Sigmoid colon (tissue), 7 donors: ENCODE measurements at regions of chr17 and their contacts with region 1.

Region 1: DNA sequence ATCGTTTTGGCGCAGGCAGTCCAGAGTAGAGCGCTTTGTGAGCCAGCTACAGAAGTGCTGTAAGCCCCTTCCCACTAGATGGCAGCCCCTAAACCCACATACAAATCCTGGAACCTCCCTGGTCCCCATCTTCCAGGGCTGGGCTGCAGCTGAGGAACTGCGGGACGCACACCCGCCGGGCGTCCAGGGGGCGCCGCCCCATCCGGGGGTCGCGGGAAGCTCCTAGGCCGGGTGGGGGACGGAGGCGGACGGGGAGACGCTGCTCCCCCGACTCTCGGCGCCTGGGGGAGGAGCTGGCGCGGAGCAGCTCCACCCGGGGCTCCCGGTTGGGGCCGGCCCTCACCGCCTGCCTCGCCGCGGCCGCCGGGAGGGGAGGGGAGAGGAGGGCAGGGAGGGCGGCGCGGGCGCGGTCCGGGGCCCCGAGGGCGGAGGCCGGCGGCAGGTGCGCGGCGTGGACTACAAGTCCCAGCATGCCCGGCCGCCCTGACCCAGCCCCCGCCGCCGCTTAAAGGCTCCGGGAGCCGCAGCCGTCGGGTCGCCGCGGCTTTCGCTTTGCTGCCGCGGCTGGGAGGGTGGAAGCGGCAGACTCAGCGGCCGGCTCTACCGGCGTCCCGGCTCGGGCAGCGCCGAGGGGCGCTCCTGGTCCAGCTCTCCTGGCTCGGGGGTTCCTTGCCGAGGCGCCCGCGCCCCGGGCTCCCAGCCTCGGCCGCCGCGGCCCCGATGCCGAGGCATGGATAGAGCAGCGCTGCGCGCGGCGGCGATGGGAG is at the start of gene KSR1:
- DNase-seq: peak; percentile 90
- H3K4me3 ChIP-seq: peak within 1 kb of the TSS; percentile 64 to 90 (median 81)
- H3K27ac ChIP-seq: peak within 1 kb of the TSS; percentile 86 to 93 (median 89)
- H3K4me1 ChIP-seq: peaks cover 0 to 38% (median 28%) of the 10 kb centered on the region in 4 donors
- H3K27me3 ChIP-seq: no peaks in the 10 kb centered on the region
- CTCF ChIP-seq: peak in 1 of 4 experiments; percentile 22
- EP300 ChIP-seq: no peak
- POLR2A ChIP-seq: peak in 1 of 2 donors; percentile 31
- total RNA-seq, gene KSR1: 13.8 to 25.8 (median 18.9) TPM

Region 2: GRCh38 chr17:27236717-27237315 is 219.3 kb before region 1 on chr17:
- intact Hi-C with region 1: loop called (anchors 5 kb)
- DNase-seq: peak; percentile 87
- H3K4me3 ChIP-seq: no peak overlapping the region
- H3K27ac ChIP-seq: no peak overlapping the region
- H3K4me1 ChIP-seq: peaks cover 0 to under 1% (median 0%) of the 10 kb centered on the region in 4 donors
- H3K27me3 ChIP-seq: no peaks in the 10 kb centered on the region
- CTCF ChIP-seq: peak; percentile 71 to 95 (median 92)
- EP300 ChIP-seq: no peak
- POLR2A ChIP-seq: no peak

Region 3: GRCh38 chr17:27381007-27381501 is 75.0 kb before region 1 on chr17:
- intact Hi-C with region 1: loop called (anchors 10 kb)
- DNase-seq: peak; percentile 68
- H3K4me3 ChIP-seq: no peak overlapping the region
- H3K27ac ChIP-seq: peak overlapping the region in 1 of 4 donors; percentile 88
- H3K4me1 ChIP-seq: peaks cover 0 to 72% (median 55%) of the 10 kb centered on the region in 4 donors
- H3K27me3 ChIP-seq: no peaks in the 10 kb centered on the region
- CTCF ChIP-seq: peak; percentile 46 to 80 (median 60)
- EP300 ChIP-seq: no peak
- POLR2A ChIP-seq: no peak

Region 4: GRCh38 chr17:27578718-27579085 is 122.6 kb after region 1 on chr17:
- intact Hi-C with region 1: loop called (anchors 5 kb)
- DNase-seq: no peak
- H3K4me3 ChIP-seq: no peak overlapping the region
- H3K27ac ChIP-seq: no peak overlapping the region
- H3K4me1 ChIP-seq: peaks cover 0 to 32% (median 14%) of the 10 kb centered on the region in 4 donors
- H3K27me3 ChIP-seq: no peaks in the 10 kb centered on the region
- CTCF ChIP-seq: no peak
- EP300 ChIP-seq: no peak
- POLR2A ChIP-seq: no peak

Region 5: GRCh38 chr17:27601069-27601975 is 145.2 kb after region 1 on chr17:
- intact Hi-C with region 1: loop called (anchors 1 kb)
- DNase-seq: peak; percentile 87
- H3K4me3 ChIP-seq: no peak overlapping the region
- H3K27ac ChIP-seq: no peak overlapping the region
- H3K4me1 ChIP-seq: peaks cover 0 to 13% (median 3%) of the 10 kb centered on the region in 4 donors
- H3K27me3 ChIP-seq: no peaks in the 10 kb centered on the region
- CTCF ChIP-seq: peak; percentile 85 to 95 (median 86)
- EP300 ChIP-seq: no peak
- POLR2A ChIP-seq: no peak